ENCODE measurements at regions of chr12 and their contacts with region 1.

Region 1: DNA sequence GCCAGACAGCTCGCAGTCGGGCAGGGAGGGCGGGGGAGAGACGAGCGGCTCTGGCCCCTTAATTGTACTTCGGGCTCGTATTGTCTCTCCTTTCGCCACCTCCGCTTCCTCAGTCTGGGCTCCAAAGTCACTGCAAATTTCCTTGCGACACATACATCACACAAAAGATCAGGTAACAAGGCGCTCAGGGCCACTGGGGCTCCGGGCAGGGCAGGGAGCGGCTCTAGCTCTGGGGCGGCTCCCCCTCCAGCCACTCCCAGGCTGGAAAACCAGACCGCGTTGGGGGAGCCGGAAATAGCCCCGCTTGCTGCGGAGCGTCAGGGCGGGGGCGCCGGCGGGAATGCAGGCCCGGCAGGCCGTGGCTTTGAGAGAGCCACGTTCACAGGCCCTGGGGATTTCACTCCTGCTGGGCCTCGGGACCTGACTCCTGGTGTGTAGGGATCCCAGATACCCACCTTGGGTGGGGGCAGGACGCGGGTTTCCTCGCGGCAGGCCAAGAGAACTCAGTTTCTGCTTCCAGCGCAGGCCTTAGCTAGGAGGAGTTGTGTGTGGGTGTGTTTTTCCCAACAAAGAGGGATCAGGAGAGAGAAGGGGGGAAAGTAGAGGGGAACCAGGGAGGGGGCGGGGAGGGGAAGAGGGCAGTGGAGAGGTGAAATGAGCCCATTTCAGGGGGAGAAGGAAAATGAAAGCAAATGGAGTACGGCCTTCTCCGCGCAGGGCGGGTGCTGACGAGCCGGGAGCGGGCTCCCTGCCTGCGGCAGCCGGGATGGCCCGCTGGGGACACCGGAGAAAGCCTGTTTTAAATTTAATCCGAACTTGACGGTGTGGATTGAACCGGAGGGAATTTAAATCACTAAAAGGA is 4.4 kb upstream of the HOXC9 start:
- DNase-seq: peak; percentile 36
- H3K4me3 Mint-ChIP-seq: peak overlapping the region; percentile 74
- H3K27ac Mint-ChIP-seq: no peak overlapping the region
- H3K4me1 Mint-ChIP-seq: peaks cover 36% of the 10 kb centered on the region
- H3K27me3 Mint-ChIP-seq: peaks cover 79% of the 10 kb centered on the region

Region 2: DNA sequence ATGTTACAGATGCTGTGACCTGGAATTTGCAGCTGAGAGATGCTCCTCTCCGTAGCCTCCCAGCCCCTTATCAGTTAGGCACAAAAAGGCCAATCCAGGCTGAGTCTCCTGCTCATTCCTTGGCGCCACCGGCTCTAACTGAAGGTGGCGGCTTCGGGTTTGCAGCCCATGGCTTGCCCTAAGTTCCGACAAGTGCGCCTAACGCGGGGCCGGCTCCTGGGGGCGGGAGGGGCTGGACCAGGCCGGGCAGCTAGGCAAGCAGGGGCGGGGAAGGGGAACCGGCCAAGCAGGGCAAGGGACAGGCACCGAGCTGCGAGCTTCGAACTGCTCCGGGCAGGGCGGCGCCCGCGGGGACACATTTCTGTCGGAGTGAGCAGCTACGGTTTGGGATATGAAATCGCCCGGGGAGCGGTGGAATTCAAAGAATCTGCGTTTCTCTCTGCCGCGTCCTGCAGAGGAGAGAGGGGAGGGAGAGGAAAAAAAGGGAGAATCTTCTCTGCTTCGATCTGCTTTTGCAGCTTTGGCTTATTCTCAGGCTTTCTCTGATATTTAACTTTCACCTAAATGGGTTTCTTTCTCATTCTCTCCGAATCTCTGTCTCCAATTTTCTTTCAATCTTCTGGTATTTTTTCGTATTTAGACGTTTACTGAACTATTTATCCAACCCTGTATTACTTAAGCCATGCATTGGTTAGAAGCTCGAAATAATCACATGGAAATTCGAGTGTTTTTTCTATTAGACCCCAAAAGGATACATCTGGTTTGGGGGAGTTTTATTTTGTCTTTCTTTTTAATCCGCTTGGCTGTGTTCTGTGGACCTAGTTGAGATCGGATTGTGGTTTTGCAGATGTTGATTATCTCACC is 42.5 kb before region 1 on chr12:
- CTCF ChIA-PET with region 1: interaction called, 3 read pairs
- intact Hi-C with region 1: loop called (anchors 5 kb)
- DNase-seq: no peak
- H3K4me3 Mint-ChIP-seq: no peak overlapping the region
- H3K27ac Mint-ChIP-seq: no peak overlapping the region
- H3K4me1 Mint-ChIP-seq: peaks cover 40% of the 10 kb centered on the region
- H3K27me3 Mint-ChIP-seq: peaks cover 91% of the 10 kb centered on the region

Region 3: GRCh38 chr12:53973093-53974042 is 22.2 kb before region 1 on chr12 and contains the start of gene HOXC11:
- CTCF ChIA-PET with region 1: no interaction called
- intact Hi-C with region 1: no loop called
- DNase-seq: no peak
- H3K4me3 Mint-ChIP-seq: peak within 1 kb of the TSS; percentile 2
- H3K27ac Mint-ChIP-seq: peak within 1 kb of the TSS; percentile 28
- H3K4me1 Mint-ChIP-seq: peaks cover 22% of the 10 kb centered on the region
- H3K27me3 Mint-ChIP-seq: peaks cover 84% of the 10 kb centered on the region
- total RNA-seq, gene HOXC11: not detected

Region 4: DNA sequence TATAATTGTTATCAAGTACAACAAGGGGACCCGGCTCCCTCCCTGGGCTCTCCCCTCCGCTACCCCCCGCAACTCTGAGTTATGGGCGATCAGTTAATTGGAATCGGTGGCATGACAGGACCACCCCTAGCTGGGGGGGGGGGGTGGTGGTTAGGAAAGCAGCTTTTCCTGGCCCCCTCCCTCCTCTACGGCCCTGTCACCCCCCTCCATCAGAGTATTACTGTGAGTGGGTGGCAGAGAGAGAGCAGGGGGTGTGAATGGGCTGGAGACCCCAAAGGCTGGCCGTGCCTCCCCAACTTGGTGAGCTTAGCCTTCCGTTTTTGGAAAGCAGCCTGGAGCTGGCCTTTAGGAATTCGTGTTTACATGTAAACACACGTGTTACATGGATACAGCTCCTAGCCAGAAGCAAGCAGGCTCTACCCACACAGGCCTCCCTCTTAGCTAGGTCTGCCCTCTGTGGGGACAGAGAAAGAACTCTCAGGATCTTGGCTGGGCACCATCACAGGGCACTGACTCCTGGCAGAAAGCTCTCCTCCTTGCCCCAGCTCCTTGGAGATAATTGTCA is 56.9 kb after region 1 on chr12:
- CTCF ChIA-PET with region 1: no interaction called
- intact Hi-C with region 1: no loop called
- DNase-seq: no peak
- H3K4me3 Mint-ChIP-seq: peak overlapping the region; percentile 38
- H3K27ac Mint-ChIP-seq: no peak overlapping the region
- H3K4me1 Mint-ChIP-seq: peaks cover 25% of the 10 kb centered on the region
- H3K27me3 Mint-ChIP-seq: peaks cover 73% of the 10 kb centered on the region

Region 5: DNA sequence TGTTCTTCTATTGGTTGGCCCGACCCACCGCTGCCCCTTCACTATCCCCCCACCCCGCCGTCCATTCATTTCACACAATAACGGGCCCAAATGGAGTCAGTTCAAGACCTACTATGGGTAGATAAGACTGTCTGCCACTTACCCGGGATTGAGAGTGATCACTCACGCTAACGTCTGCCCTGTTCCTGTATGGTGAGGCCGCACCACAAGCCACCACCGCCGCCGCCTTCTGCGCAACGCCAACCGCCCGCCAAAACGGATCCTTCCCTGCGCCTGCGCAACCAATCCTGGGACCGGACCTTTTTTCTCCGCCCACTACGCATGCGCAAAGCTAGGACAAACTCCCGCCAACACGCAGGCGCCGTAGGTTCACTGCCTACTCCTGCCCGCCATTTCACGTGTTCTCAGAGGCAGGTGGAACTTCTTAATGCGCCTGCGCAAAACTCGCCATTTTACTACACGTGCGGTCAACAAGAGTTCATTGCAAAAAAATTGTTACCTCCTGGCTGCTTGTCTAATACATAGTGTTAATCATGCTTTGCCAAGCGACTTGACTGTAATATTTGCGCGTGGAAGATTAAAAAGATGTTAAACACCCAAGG is 284.4 kb after region 1 on chr12 and contains the start of gene CBX5:
- CTCF ChIA-PET with region 1: no interaction called
- intact Hi-C with region 1: no loop called
- DNase-seq: peak; percentile 100
- H3K4me3 Mint-ChIP-seq: no peak within 1 kb of the TSS
- H3K27ac Mint-ChIP-seq: no peak within 1 kb of the TSS
- H3K4me1 Mint-ChIP-seq: peaks cover 53% of the 10 kb centered on the region
- H3K27me3 Mint-ChIP-seq: no peaks in the 10 kb centered on the region
- total RNA-seq, gene CBX5: 169 to 173 TPM

Region 6: GRCh38 chr12:54379401-54380201 is 384.0 kb after region 1 on chr12:
- CTCF ChIA-PET with region 1: no interaction called
- intact Hi-C with region 1: no loop called
- DNase-seq: peak; percentile 96
- H3K4me3 Mint-ChIP-seq: peak overlapping the region; percentile 53
- H3K27ac Mint-ChIP-seq: no peak overlapping the region
- H3K4me1 Mint-ChIP-seq: peaks cover 14% of the 10 kb centered on the region
- H3K27me3 Mint-ChIP-seq: no peaks in the 10 kb centered on the region